Astrocyte of the cerebellum (primary cell): ENCODE measurements at regions of chr3 and their contacts with region 1.

Region 1: GRCh38 chr3:47324278-47324865 is 41.6 kb downstream of the KLHL18 start:
- DNase-seq: peak; percentile 79
- H3K4me3 ChIP-seq: no peak overlapping the region
- CTCF ChIP-seq: peak; percentile 77

Region 2: DNA sequence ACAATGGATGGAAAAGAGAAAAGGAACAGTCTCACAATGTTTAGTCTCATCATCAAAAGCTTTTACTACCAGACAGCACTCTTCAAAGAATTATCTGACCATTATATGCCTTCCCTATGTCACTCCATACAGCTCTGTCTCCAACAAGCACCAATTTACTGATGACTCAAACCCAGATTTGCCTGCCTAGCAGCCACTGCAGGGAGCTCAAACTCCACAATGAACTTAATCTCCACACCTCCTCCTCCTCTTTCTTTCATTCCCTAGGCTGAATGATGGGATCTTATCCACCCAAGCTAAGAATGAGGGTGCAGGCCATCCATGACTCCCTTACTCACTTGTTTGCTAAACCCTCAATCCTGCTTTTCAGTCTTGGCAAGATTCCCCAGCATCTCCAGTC is 299.4 kb before region 1 on chr3:
- in situ Hi-C with region 1: loop called (anchors 25 kb)
- DNase-seq: no peak
- H3K4me3 ChIP-seq: no peak overlapping the region
- CTCF ChIP-seq: no peak

Region 3: DNA sequence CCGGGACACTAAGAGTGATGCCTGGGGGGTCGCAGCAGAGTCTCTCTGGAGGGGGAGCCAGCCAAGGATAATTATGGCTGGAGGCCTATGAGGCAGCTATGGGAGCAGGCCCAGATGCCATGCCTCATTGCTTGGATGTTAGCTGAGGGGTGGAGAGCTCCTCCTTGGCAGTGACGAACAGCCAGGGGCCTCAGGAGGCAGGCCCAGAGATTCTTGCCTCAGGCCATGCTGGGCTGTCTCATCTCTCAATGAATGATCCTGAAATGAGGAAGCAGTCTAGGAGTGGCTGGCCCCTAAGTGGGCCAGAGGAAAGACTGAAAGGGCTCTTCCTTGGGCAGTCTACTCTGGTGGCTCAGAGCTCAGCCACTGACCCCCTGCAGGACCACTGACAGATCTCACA is 63.1 kb before region 1 on chr3:
- in situ Hi-C with region 1: no loop called
- DNase-seq: no peak
- H3K4me3 ChIP-seq: no peak overlapping the region
- CTCF ChIP-seq: no peak